Activated T-helper 2 cell treated with anti-CD3 and anti-CD28 coated beads, Interferon-gamma antibody, Interleukin-2, Interleukin-4, amounts not matched to agents 10 μg/mL and 5 μg/mL and 100 μg/mL, durations not matched to agents 14 hours and 24 hours and 36 hours (primary cell): ENCODE measurements at regions of chr12 and their contacts with region 1.

Region 1: DNA sequence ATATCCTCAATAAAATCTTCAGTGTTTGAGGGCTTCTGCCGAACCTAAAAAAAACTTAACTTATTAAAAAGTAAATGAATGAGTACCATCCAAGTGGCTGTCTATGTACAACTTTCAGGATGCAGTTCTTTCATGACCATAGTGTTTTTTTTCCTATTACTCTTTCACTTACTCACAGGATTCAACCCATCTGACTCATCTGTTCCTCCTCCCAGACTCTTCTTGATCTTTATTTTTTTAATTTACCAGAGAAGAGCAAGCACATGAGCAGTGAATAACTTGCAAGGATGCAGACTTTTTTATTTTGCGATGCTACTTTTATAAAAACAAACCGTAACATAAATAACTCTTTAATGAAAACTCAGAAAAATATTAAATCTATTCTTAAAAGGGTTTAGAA is 24.5 kb downstream of the RECQL start:
- DNase-seq: no peak
- H3K4me3 Mint-ChIP-seq: no peak overlapping the region
- H3K27ac Mint-ChIP-seq: peak overlapping the region; percentile 74
- H3K4me1 Mint-ChIP-seq: peaks cover 26% of the 10 kb centered on the region
- H3K27me3 Mint-ChIP-seq: no peaks in the 10 kb centered on the region

Region 2: GRCh38 chr12:21438643-21439042 is 38.3 kb before region 1 on chr12:
- intact Hi-C with region 1: loop called (anchors 5 kb)
- DNase-seq: no peak
- H3K4me3 Mint-ChIP-seq: peak overlapping the region; percentile 92
- H3K27ac Mint-ChIP-seq: peak overlapping the region; percentile 93
- H3K4me1 Mint-ChIP-seq: peaks cover 39% of the 10 kb centered on the region
- H3K27me3 Mint-ChIP-seq: no peaks in the 10 kb centered on the region